Thyroid gland (tissue), 4 donors: ENCODE measurements at regions of chr6 and their contacts with region 1.

Region 1: GRCh38 chr6:43964659-43965570 is 162.3 kb downstream of the MRPL14 start:
- DNase-seq: no peak
- H3K4me3 ChIP-seq: no peak overlapping the region
- H3K27ac ChIP-seq: no peak overlapping the region
- H3K4me1 ChIP-seq: no peaks in the 10 kb centered on the region
- H3K27me3 ChIP-seq: no peaks in the 10 kb centered on the region
- CTCF ChIP-seq: no peak
- POLR2A ChIP-seq: no peak

Region 2: DNA sequence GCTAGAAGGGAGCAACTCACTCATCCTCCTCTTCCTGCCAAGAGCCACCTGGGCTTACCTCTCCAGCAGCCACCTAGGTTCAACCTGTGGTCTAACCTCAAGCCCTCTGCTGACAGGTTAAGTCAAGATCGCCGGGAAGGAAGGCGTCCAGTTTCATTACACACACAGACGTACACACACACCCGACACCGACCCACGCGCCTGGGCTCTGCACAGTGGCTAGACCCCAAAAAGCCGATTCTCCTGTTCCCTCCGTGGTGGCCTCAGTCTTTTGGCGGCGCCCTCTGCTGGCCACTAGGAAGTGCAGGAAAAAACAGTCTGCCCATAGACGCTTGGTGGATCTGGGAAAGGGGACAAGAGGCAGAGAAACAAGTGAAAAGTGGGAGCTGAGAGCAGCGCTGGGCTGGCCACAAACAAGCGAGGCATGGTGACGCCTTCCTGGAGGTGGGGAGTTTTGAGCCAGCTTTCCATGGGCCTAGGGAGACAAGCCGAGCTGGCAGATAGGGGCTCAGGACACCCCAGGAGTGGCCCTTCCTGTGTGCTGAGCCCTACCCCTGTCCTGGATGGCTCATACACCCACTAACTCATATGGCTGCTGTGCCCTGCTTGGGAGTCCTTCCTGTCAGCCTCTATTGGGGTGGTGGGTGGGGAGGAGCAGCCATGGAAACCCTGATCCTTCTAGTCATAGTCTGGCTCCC is 109.7 kb after region 1 on chr6:
- intact Hi-C with region 1: loop called (anchors 10 kb)
- DNase-seq: peak; percentile 70 to 74
- H3K4me3 ChIP-seq: no peak overlapping the region
- H3K27ac ChIP-seq: peak overlapping the region; percentile 1 to 29 (median 22)
- H3K4me1 ChIP-seq: peaks cover 11 to 42% of the 10 kb centered on the region in 2 donors
- H3K27me3 ChIP-seq: no peaks in the 10 kb centered on the region
- CTCF ChIP-seq: peak; percentile 74 to 98 (median 86)
- POLR2A ChIP-seq: no peak